ENCODE measurements at regions of chr19 and their contacts with region 1.

Region 1: DNA sequence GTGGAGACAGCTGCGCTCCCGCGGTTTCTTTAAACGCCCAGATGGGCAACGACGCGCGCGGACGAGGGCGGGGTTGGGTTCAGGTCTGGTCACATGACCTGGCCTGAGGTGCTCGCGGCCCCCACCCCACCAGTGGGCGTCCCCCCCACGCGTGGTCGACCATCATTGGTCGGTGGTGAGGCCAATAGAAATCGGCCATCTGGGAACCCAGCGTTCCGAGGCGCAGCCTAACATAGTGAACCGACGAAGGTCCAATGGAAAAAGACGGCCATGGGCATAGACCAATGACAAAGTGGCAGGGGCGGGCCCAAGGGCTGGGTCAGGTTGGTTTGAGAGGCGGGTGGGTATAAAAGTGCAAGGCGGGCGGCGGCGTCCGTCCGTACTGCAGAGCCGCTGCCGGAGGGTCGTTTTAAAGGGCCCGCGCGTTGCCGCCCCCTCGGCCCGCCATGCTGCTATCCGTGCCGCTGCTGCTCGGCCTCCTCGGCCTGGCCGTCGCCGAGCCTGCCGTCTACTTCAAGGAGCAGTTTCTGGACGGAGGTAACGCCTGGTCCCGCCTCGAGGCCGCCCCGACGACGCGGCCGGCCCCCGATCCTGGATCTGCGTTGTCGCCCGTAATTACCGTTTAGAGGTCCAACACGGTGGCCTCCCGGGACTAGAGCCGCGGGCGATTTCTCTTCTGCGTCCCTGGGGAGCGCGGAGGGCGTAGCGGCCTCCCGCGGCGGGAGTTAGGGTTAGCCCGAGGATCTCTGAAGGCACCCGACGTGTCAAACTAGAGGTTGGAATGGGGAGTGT is at the start of gene CALR:
- DNase-seq: peak; percentile 96
- H3K4me3 ChIP-seq: peak within 1 kb of the TSS; percentile 89 to 97
- H3K27ac ChIP-seq: peak within 1 kb of the TSS; percentile 71 to 83
- H3K4me1 ChIP-seq: peaks cover 19 to 33% of the 10 kb centered on the region in 2 experiments; a peak in 3 of 4 replicates
- H3K27me3 ChIP-seq: no peaks in the 10 kb centered on the region
- CTCF ChIP-seq: peak; percentile 28; the same call in 1 of the 2 replicates
- EP300 ChIP-seq: no peak
- RAD21 ChIP-seq: no peak
- polyA plus RNA-seq, gene CALR: 1,316 and 1,334 TPM in 2 replicates

Region 2: DNA sequence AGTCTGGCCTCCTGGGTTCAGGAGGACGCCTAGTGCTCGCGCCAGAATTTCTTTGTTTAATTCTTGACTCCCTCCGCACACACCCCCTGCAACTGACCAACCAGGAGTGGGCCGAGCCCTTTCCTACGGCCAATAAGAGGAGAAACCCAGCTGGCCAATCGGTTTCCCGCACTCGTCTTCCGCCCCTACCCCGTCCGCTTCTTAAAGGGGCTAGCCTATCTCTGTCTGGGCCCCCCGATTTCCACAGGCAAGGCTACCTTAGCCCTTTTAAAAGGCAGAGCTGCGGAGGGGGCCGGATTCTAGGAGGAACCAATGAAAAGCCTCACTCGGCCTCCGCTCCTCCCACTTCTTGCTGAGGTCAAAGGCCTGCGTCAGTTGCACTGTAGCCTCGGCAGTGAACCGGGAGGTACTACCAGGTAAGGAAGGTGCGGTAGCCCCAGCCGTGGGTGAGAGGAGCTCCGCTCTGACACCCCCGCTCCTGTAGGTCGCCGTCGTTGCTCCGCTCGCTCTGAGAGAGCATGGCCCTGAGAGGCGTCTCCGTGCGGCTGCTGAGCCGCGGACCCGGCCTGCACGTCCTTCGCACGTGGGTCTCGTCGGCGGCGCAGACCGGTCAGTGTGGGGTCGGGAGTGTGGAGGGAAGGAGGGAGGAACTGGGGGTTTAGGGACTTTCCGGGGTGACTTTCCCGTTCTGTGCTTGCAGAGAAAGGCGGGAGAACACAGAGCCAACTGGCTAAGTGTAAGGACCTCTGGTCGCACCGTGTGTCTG is 47.5 kb before region 1 on chr19 and contains the start of gene GCDH:
- CTCF ChIA-PET with region 1: interaction called, 3 read pairs
- POLR2A ChIA-PET with region 1: interaction called, 16 read pairs
- DNase-seq: peak; percentile 96
- H3K4me3 ChIP-seq: peak within 1 kb of the TSS; percentile 80 to 84
- H3K27ac ChIP-seq: no peak within 1 kb of the TSS
- H3K4me1 ChIP-seq: peaks cover 6 to 8% of the 10 kb centered on the region in 2 experiments; a peak in 2 of 4 replicates
- H3K27me3 ChIP-seq: no peaks in the 10 kb centered on the region; the same call in 1 of the 2 replicates
- CTCF ChIP-seq: no peak
- EP300 ChIP-seq: no peak
- RAD21 ChIP-seq: no peak
- polyA plus RNA-seq, gene GCDH: 29.4 and 36.6 TPM in 2 replicates

Region 3: DNA sequence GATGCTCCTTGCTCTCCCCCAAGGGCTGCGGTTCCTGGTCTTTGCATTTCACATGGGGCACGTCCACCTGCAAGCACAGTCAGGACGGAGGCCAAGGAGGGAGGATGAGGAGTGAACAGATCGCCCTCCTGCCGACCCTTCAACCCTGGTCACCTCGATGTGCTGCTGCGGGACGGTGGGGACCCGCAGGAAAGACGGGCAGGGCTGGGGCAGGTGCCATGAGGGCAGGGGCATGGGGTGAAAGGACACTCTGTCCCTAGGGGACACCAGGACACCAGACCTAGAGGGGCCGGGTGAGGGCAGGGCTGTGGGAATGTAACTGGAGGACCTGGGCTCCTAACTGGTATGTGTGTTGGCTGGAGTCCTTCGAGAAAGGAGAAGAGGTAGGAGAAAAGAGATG is 20.2 kb before region 1 on chr19:
- CTCF ChIA-PET with region 1: interaction called, 4 read pairs
- POLR2A ChIA-PET with region 1: interaction called, 12 read pairs
- DNase-seq: no peak
- H3K4me3 ChIP-seq: no peak overlapping the region
- H3K27ac ChIP-seq: no peak overlapping the region
- H3K4me1 ChIP-seq: peaks cover 0 to 10% of the 10 kb centered on the region in 2 experiments; a peak in 1 of 4 replicates
- H3K27me3 ChIP-seq: no peaks in the 10 kb centered on the region
- CTCF ChIP-seq: no peak
- EP300 ChIP-seq: no peak
- RAD21 ChIP-seq: no peak